ENCODE measurements at regions of chr9 and their contacts with region 1.

Region 1: DNA sequence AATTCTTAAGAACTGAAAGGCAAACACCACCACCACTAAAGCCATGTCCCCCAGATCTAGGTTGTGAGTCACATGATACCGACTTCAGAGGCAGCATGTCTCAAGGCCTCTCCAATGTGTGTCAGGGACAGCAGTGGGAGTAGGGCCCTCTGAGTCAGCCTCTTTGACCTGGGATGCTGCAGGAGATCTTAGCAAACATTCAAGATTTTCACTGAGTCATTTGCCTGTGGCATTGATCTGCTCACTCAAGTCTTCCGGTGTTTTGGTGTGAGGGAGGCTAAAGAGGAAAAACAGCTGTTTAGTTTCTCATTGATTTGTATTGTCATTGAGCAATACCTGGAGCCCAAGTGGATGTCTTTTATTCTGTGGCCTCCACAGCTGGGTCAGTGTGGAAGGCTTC is 36.1 kb downstream of the TMC1 start:
- DNase-seq: peak; percentile 94
- ATAC-seq: peak; percentile 89
- H3K4me3 ChIP-seq: no peak overlapping the region
- H3K27ac ChIP-seq: peak overlapping the region; percentile 78
- H3K4me1 ChIP-seq: peaks cover 31% of the 10 kb centered on the region
- H3K27me3 ChIP-seq: no peaks in the 10 kb centered on the region
- CTCF ChIP-seq: no peak

Region 2: DNA sequence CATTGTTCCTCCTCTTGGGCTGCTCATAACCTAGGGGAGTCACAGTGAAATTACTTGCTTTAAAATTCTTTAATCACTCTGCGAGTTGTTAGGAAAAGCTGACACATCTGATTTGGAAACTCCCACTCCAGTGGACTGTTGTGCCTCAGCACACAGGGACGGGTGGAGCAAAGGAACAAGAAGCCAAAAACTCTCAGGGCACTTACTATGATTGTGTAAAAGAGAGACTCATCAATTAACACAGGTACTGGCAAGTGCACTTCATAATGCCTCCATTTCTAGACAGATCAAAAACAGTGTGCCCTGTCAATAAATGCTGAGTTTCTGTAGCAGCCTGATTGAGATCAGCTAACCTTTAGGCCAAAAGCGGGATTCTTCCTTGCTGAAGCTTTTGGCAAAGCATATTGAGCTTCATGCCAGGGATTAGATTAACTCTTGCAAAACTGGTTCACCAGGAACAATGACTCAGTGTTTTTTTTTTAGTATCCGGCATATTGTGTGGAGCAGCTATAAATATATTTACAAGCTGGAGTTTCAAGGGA is 19.7 kb after region 1 on chr9:
- CTCF ChIA-PET with region 1: no interaction called
- POLR2A ChIA-PET with region 1: interaction called, 5 read pairs
- intact Hi-C with region 1: loop called (anchors 2 kb)
- DNase-seq: peak; percentile 93
- ATAC-seq: peak; percentile 27
- H3K4me3 ChIP-seq: peak overlapping the region; percentile 33
- H3K27ac ChIP-seq: peak overlapping the region; percentile 94
- H3K4me1 ChIP-seq: peaks cover 71% of the 10 kb centered on the region
- H3K27me3 ChIP-seq: no peaks in the 10 kb centered on the region
- CTCF ChIP-seq: no peak

Region 3: DNA sequence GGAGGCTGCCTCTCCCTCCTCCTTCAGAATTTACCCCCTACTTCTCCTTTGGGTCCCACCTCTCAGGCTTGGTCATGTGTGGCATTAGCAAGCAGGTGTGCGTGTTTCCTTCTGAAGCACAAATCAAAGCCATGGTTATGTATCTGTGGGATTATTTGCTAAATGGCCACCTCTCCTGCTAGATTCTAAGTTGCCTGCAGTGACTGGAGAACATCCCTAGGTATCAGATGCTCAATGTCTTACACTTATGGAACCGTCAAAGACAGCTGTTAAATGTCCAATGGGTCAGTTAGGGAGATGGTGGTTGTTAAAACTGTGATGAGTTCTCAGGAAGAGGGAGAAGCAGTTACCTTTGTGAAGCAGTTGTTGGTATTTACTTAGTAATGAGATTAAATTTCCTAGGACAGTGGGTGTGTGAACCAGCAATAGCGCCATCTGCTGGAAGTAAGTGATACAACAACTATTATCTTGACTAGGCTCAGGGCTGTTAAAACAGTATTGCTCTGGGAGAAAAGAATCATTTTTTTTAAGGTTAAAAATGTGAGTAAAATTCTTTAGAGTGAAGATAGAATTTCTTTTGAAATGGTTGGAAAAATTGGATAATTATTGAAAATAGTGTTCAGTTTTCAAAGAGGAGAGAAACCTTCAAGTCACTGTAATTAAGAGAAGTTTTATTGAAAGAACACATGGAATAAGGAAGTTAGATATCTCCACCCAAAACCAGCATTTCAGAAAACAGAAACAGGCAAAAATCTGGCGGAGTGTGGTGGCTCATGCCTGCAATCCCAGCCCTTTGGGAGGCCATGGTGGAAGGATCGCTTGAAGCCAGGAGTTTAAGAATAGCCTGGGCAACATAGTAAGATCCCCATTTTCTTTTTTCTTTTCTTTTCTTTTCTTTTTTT is 35.2 kb after region 1 on chr9:
- CTCF ChIA-PET with region 1: no interaction called
- POLR2A ChIA-PET with region 1: no interaction called
- intact Hi-C with region 1: loop called (anchors 5 kb)
- DNase-seq: peak; percentile 66
- ATAC-seq: peak; percentile 75
- H3K4me3 ChIP-seq: no peak overlapping the region
- H3K27ac ChIP-seq: no peak overlapping the region
- H3K4me1 ChIP-seq: peaks cover 4% of the 10 kb centered on the region; the same call in 1 of the 2 replicates
- H3K27me3 ChIP-seq: no peaks in the 10 kb centered on the region
- CTCF ChIP-seq: peak; percentile 81

Measured in PC-3 (cell line).